Lower lobe of right lung (tissue), 2 donors: ENCODE measurements at regions of chr10 and their contacts with region 1.

Region 1: GRCh38 chr10:69515699-69516259 is 57.4 kb downstream of the NEUROG3 start:
- DNase-seq: peak; percentile 75
- ATAC-seq: peak; percentile 90 to 94
- H3K4me3 ChIP-seq: no peak overlapping the region
- H3K27ac ChIP-seq: no peak overlapping the region
- H3K4me1 ChIP-seq: no peaks in the 10 kb centered on the region
- H3K27me3 ChIP-seq: no peaks in the 10 kb centered on the region
- CTCF ChIP-seq: peak; percentile 77

Region 2: DNA sequence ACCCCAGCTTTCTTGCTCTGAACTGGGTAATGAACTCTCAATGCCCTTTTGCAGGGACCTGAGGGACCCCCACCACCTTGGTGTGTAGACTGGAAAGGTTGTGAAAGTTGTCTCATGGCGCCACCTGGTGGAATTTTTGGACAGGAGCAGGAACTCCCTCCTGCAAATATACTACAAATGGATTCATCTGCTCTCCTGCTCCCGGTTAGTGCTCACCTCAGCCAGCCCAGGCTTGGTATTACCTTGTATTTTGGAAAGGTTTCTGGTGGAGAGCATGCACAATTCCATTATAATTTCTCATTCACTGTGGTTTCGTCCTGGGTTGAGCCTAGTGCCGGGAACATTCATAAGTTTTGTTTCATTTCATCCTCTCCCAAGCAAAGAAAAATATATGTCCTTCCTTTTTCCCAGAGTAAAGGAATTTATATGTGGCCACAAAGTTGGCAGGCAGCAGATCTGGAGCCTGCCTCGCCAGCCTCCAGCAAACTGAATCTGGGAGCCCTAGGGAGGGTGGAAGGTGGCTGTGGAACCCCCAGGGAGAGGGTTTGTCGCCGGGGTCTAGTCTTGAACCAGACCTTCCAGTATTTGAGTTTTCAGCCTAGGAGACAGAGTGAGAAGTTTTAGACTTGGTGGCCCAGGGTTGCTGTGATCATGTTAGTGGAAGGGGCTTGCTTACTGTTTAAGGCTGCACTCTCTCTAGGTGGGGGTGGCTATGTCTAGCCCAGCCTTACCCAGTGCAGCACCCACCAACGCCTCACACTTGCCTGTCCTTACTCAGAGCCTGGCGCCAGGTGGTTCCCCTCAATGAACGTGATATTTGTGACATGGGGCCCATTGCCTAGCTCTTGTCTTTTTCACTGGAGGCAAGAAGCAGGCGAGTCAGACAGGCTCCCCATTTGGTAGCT is 123.8 kb after region 1 on chr10:
- intact Hi-C with region 1: loop called (anchors 10 kb)
- DNase-seq: peak; percentile 63
- ATAC-seq: peak in 1 of 2 donors; percentile 71
- H3K4me3 ChIP-seq: no peak overlapping the region
- H3K27ac ChIP-seq: no peak overlapping the region
- H3K4me1 ChIP-seq: no peaks in the 10 kb centered on the region
- H3K27me3 ChIP-seq: peaks cover 7% of the 10 kb centered on the region
- CTCF ChIP-seq: peak; percentile 85